ENCODE measurements at regions of chr11 and their contacts with region 1.

Region 1: GRCh38 chr11:15683528-15683927 is 568.8 kb downstream of the INSC start:
- DNase-seq: no peak
- ATAC-seq: no peak
- H3K4me3 Mint-ChIP-seq: no peak overlapping the region
- H3K27ac Mint-ChIP-seq: no peak overlapping the region
- H3K4me1 Mint-ChIP-seq: no peaks in the 10 kb centered on the region
- H3K27me3 Mint-ChIP-seq: no peaks in the 10 kb centered on the region
- CTCF ChIP-seq: no peak

Region 2: DNA sequence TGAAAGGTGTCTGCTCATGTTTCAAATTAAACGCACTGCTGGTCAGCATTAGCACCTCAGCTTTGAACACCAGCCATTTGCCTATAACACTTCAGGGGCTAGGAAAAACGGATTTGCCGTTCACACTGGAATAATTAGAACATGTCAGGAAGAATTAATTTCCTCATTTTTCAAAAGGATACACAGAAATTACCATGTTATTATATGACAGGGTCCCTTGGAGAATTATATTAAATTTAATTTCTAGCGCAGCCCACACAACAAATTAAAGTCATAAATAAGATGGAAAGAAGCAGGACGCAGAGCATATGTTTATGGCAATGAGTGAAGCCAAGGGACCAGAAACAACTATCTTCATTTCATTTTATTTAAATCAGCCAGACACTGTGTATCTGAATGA is 756.6 kb after region 1 on chr11:
- CTCF ChIA-PET with region 1: no interaction called
- POLR2A ChIA-PET with region 1: no interaction called
- intact Hi-C with region 1: loop called (anchors 5 kb)
- DNase-seq: no peak
- ATAC-seq: no peak
- H3K4me3 Mint-ChIP-seq: no peak overlapping the region
- H3K27ac Mint-ChIP-seq: no peak overlapping the region
- H3K4me1 Mint-ChIP-seq: no peaks in the 10 kb centered on the region
- H3K27me3 Mint-ChIP-seq: no peaks in the 10 kb centered on the region
- CTCF ChIP-seq: no peak